GM12878 (cell line): ENCODE measurements at regions of chr10 and their contacts with region 1.

Region 1: GRCh38 chr10:82953909-82954308 is 1078.9 kb downstream of the NRG3 start:
- DNase-seq: no peak
- ATAC-seq: peak; percentile 59
- H3K4me3 ChIP-seq: no peak overlapping the region
- H3K27ac ChIP-seq: no peak overlapping the region
- H3K4me1 ChIP-seq: no peaks in the 10 kb centered on the region
- H3K27me3 ChIP-seq: no peaks in the 10 kb centered on the region
- CTCF ChIP-seq: peak in 1 of 3 experiments; percentile 24; a peak in 1 of 6 replicates
- EP300 ChIP-seq: no peak
- POLR2A ChIP-seq: no peak
- RAD21 ChIP-seq: peak; percentile 36; the same call in 1 of the 2 replicates

Region 2: GRCh38 chr10:82643601-82644000 is 310.3 kb before region 1 on chr10:
- CTCF ChIA-PET with region 1: no interaction called
- POLR2A ChIA-PET with region 1: no interaction called
- RAD21 ChIA-PET with region 1: no interaction called
- SMC1A ChIA-PET with region 1: no interaction called
- in situ Hi-C with region 1: no loop called
- intact Hi-C with region 1: no loop called
- DNase-seq: no peak
- ATAC-seq: no peak
- H3K4me3 ChIP-seq: no peak overlapping the region
- H3K27ac ChIP-seq: no peak overlapping the region
- H3K4me1 ChIP-seq: no peaks in the 10 kb centered on the region
- H3K27me3 ChIP-seq: no peaks in the 10 kb centered on the region
- CTCF ChIP-seq: no peak
- EP300 ChIP-seq: no peak
- POLR2A ChIP-seq: no peak
- RAD21 ChIP-seq: no peak

Region 3: DNA sequence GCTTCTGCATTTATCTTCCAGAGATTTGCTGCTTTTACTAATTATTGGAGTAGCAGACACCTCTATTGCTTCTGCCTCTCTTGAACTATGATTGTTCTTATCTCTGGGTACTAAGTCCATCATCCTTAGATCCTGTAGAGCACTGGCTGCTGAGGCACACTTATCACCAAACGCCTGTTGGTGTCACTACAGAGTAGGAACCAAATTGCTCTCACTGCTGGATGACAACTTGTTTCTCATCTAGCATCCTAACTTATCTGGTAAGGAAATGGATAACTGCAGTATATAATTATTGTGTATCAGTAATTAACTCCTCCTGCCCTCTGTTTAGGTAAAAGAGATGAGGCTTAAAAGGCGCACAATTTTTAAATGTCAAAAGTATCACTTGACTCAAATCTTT is 19.5 kb before region 1 on chr10:
- CTCF ChIA-PET with region 1: interaction called, 4 read pairs
- POLR2A ChIA-PET with region 1: no interaction called
- RAD21 ChIA-PET with region 1: interaction called, 4 read pairs
- SMC1A ChIA-PET with region 1: interaction called, 10 read pairs
- in situ Hi-C with region 1: no loop called
- intact Hi-C with region 1: no loop called
- DNase-seq: no peak
- ATAC-seq: peak; percentile 90
- H3K4me3 ChIP-seq: no peak overlapping the region
- H3K27ac ChIP-seq: no peak overlapping the region
- H3K4me1 ChIP-seq: no peaks in the 10 kb centered on the region
- H3K27me3 ChIP-seq: no peaks in the 10 kb centered on the region
- CTCF ChIP-seq: peak; percentile 19 to 31 (median 28); a peak in 4 of 6 replicates
- EP300 ChIP-seq: no peak
- POLR2A ChIP-seq: no peak
- RAD21 ChIP-seq: peak; percentile 48; the same call in 1 of the 2 replicates

Region 4: DNA sequence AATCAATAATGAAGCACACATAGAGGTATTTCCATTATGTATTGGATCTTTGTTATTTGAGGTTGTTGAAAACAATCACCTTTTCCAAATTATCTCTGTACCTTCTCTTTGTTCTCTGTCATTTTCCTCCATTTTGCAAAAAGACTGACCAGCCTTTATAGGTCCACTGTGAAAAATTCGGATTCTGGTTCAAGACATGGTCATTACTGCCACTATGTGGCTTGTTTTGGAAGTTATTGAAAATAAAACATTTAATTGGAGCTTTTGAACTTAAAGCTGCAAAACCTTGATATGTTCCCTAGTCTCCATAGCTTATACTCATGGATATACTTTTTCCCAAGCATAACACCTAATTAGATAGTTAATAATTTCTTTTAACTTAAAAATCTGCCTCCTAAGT is 15.5 kb after region 1 on chr10:
- CTCF ChIA-PET with region 1: interaction called, 35 read pairs
- POLR2A ChIA-PET with region 1: interaction called, 3 read pairs
- RAD21 ChIA-PET with region 1: interaction called, 13 read pairs
- SMC1A ChIA-PET with region 1: interaction called, 19 read pairs
- in situ Hi-C with region 1: no loop called
- intact Hi-C with region 1: no loop called
- DNase-seq: no peak
- ATAC-seq: peak; percentile 66
- H3K4me3 ChIP-seq: no peak overlapping the region
- H3K27ac ChIP-seq: no peak overlapping the region
- H3K4me1 ChIP-seq: no peaks in the 10 kb centered on the region
- H3K27me3 ChIP-seq: no peaks in the 10 kb centered on the region
- CTCF ChIP-seq: peak in 2 of 3 experiments; percentile 18 to 55; a peak in 3 of 6 replicates
- EP300 ChIP-seq: no peak
- POLR2A ChIP-seq: no peak
- RAD21 ChIP-seq: peak; percentile 90

Region 5: DNA sequence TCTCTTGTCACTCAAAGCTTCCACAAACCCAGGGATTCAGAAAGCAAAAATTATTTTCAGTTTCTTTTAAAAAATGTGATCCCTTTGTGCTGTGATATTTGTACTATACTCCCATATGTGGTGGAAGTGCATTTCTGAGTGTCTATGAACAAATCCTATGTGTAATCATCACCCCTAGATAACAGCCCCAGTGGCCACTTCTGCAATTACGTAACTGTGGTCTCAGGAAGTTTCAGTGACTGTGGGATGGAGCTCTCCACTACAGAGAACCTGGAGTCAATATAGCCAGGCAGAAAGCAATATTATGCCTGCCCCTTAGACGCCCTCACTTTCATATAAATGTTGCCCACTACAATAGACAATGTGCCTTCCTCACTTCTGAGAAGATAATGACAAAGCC is 83.7 kb after region 1 on chr10:
- CTCF ChIA-PET with region 1: no interaction called
- POLR2A ChIA-PET with region 1: no interaction called
- RAD21 ChIA-PET with region 1: no interaction called
- SMC1A ChIA-PET with region 1: no interaction called
- in situ Hi-C with region 1: no loop called
- intact Hi-C with region 1: no loop called
- DNase-seq: no peak
- ATAC-seq: peak; percentile 59
- H3K4me3 ChIP-seq: no peak overlapping the region
- H3K27ac ChIP-seq: no peak overlapping the region
- H3K4me1 ChIP-seq: no peaks in the 10 kb centered on the region
- H3K27me3 ChIP-seq: no peaks in the 10 kb centered on the region
- CTCF ChIP-seq: no peak
- EP300 ChIP-seq: no peak
- POLR2A ChIP-seq: no peak
- RAD21 ChIP-seq: no peak

Region 6: DNA sequence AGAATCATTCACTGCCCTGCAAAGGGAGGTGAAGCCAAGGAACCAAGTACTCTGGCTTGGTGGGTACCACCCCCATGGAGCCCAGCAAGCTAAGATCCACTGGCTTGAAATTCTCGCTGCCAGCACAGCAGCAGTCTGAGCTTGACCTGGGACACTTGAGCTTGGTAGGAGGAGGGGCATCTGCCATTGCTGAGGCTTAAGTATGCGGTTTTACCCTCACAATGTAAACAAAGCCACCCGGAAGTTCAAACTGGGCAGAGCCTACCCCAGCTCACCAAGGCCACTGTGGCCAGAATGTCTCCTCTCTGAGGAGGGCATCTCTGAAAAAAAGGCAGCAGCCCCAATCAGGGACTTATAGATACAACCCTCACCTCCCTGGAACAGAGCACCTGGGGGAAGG is 135.4 kb after region 1 on chr10:
- CTCF ChIA-PET with region 1: no interaction called
- POLR2A ChIA-PET with region 1: no interaction called
- RAD21 ChIA-PET with region 1: no interaction called
- SMC1A ChIA-PET with region 1: no interaction called
- in situ Hi-C with region 1: no loop called
- intact Hi-C with region 1: no loop called
- DNase-seq: no peak
- ATAC-seq: no peak
- H3K4me3 ChIP-seq: no peak overlapping the region
- H3K27ac ChIP-seq: no peak overlapping the region
- H3K4me1 ChIP-seq: no peaks in the 10 kb centered on the region
- H3K27me3 ChIP-seq: no peaks in the 10 kb centered on the region
- CTCF ChIP-seq: no peak
- EP300 ChIP-seq: no peak
- POLR2A ChIP-seq: no peak
- RAD21 ChIP-seq: no peak